WTC11 (cell line): ENCODE measurements at regions of chr14 and their contacts with region 1.

Region 1: GRCh38 chr14:75514673-75515628 is 7.3 kb upstream of the BATF start:
- DNase-seq: peak; percentile 72
- ATAC-seq: peak; percentile 77
- H3K4me3 Mint-ChIP-seq: no peak overlapping the region
- H3K27ac Mint-ChIP-seq: no peak overlapping the region
- H3K4me1 Mint-ChIP-seq: peaks cover 7% of the 10 kb centered on the region
- H3K27me3 Mint-ChIP-seq: no peaks in the 10 kb centered on the region; the same call in 1 of the 2 replicates
- CTCF ChIP-seq: 0 out of 2 replicates have a peak, but pooled peaks have one; percentile 17

Region 2: GRCh38 chr14:75090353-75090752 is 424.6 kb before region 1 on chr14:
- CTCF ChIA-PET with region 1: no interaction called
- POLR2A ChIA-PET with region 1: no interaction called
- DNase-seq: no peak
- ATAC-seq: no peak
- H3K4me3 Mint-ChIP-seq: no peak overlapping the region
- H3K27ac Mint-ChIP-seq: no peak overlapping the region
- H3K4me1 Mint-ChIP-seq: peaks cover 6% of the 10 kb centered on the region
- H3K27me3 Mint-ChIP-seq: no peaks in the 10 kb centered on the region
- CTCF ChIP-seq: no peak

Region 3: DNA sequence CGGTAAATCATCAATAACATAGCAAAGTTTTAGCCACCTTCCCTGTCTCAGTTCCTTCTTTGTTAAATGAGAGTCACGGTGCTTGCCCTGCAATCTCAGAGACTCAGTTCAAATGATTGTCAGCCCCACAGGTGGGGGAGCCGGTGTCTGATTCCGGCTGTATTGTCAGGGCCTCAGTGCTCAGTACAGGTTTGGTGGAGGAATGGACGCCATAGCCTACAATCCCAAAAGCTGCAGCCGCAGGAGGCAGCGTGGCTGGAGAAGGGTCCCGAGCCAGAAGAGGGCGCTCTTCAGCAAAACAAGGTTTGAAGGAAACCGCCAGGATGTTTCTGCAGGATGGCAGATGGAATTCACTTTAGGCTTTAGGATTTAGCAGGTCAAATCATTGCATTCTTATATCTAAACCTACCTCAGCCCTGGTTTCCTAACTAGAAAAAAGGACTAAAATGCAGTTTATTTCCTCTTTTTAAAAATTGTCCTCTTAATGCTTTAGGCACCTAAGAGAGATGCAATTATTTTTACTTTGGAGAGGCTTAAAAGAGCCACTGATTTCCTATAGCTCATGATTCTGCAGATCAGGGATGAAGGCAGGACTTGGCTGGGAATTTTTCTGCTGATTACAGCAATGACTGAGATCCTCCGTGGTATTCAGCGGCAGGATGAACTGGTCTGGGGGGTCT is 207.1 kb before region 1 on chr14:
- CTCF ChIA-PET with region 1: interaction called, 14 read pairs
- POLR2A ChIA-PET with region 1: no interaction called
- DNase-seq: peak; percentile 94
- ATAC-seq: peak; percentile 74
- H3K4me3 Mint-ChIP-seq: no peak overlapping the region
- H3K27ac Mint-ChIP-seq: no peak overlapping the region
- H3K4me1 Mint-ChIP-seq: peaks cover 16% of the 10 kb centered on the region
- H3K27me3 Mint-ChIP-seq: no peaks in the 10 kb centered on the region
- CTCF ChIP-seq: peak; percentile 66

Region 4: GRCh38 chr14:75527449-75528163 is 12.7 kb after region 1 on chr14:
- CTCF ChIA-PET with region 1: interaction called, 14 read pairs
- POLR2A ChIA-PET with region 1: no interaction called
- DNase-seq: no peak
- ATAC-seq: no peak
- H3K4me3 Mint-ChIP-seq: no peak overlapping the region
- H3K27ac Mint-ChIP-seq: no peak overlapping the region
- H3K4me1 Mint-ChIP-seq: no peaks in the 10 kb centered on the region
- H3K27me3 Mint-ChIP-seq: no peaks in the 10 kb centered on the region; the same call in none of the 2 replicates
- CTCF ChIP-seq: no peak

Region 5: DNA sequence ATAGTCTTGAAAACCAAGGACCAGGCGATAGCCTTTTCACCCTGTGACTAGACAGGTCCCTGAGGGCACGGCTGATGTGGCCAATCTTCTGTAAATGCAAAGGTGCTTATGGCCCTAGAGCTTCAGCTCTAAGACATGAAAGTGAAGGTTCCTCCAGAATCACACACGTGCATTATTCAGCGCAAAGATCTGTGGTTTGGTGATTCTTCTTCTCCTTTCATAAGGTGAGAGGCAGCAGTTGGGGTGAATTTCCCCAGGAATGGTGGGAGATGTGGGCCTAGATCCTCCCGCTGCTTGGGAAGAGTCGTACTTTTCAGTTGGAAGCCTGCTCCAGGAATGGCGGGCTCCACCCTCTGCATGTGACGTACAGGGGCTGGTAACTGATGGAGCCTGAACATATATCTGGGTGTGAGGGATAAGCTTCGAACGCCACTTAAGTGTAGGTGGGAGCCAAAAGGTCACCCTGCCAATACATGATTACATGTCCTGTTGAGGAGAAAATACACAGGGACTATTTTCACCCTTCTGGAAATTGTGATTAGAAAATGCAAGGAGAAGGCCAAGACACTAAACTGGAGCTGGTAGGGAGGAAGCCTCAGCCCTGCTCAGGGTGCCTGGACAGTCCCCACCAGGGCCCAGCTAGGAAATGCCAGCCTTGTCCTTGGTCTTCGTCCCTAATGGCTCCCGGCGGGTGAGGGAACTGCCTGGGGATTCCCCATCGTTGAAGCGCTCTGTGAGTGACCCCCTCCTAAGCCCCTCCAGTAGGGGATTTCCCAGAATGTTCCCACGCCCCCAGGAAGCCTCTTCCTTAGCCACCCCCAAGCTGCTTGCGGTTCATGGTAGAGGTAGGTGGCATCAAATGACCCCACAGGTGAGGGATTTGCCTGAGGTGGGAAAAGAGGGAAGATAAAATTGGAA is 24.9 kb after region 1 on chr14:
- CTCF ChIA-PET with region 1: interaction called, 10 read pairs
- POLR2A ChIA-PET with region 1: no interaction called
- DNase-seq: no peak
- ATAC-seq: no peak
- H3K4me3 Mint-ChIP-seq: no peak overlapping the region
- H3K27ac Mint-ChIP-seq: no peak overlapping the region
- H3K4me1 Mint-ChIP-seq: no peaks in the 10 kb centered on the region
- H3K27me3 Mint-ChIP-seq: no peaks in the 10 kb centered on the region
- CTCF ChIP-seq: no peak

Region 6: DNA sequence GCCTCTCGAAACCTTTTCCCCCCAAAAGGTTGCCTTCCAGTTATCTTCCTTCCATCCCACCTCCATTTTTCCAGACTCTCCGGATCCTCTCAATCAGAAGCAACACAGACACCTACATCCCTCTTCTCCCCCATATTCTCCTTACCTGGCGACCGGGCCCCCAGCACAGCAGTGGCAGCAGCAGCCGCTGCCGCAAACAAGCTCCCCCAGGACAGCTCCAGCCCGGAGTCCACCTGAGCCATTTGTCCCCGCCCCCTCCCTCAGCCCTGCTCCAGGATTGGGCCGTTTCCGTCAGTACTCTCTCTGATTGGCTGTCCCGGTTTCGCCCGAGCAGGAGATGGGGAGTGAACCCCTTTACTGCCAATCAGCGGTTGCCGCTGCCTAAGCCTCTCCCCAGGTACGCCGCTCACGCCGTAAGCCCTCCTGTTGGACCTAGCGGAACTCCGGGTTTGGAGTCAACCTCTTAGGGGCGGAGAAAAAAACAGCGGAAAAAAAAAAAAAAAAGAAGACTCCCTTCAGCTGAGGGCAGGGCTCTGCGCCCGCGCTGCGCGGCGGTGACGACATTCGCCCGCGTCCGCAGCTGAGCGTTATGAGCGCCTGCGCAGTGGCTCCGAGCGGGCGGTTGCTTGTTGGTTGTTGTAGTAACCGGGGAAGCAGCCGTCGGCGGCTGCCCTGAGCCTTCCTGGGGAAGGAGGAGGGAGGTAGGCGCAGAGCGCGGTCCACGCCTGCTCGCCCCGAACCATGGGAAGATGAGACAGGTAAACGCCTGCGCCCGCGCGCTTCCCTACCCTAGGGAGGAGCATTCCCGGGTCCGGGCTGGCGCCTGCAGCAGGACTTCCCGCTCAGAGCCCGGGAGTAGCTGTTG is 145.9 kb after region 1 on chr14 and contains the starts of genes ERG28 and TTLL5:
- CTCF ChIA-PET with region 1: interaction called, 10 read pairs
- POLR2A ChIA-PET with region 1: no interaction called
- DNase-seq: peak; percentile 97
- ATAC-seq: peak; percentile 96
- H3K4me3 Mint-ChIP-seq: peak within 1 kb of the TSS; percentile 92
- H3K27ac Mint-ChIP-seq: peak within 1 kb of the TSS; percentile 95
- H3K4me1 Mint-ChIP-seq: peaks cover 17% of the 10 kb centered on the region
- H3K27me3 Mint-ChIP-seq: no peaks in the 10 kb centered on the region
- CTCF ChIP-seq: no peak
- total RNA-seq, gene ERG28: 27.9 to 29.9 TPM (median 29.4 TPM) in 3 replicates
- total RNA-seq, gene TTLL5: 39.6 to 42.6 TPM (median 40.8 TPM) in 3 replicates